PC-9 (cell line): ENCODE measurements at regions of chr15 and their contacts with region 1.

Region 1: GRCh38 chr15:60326824-60327654 is 70.7 kb downstream of the ANXA2 start:
- DNase-seq: peak; percentile 36 to 42
- H3K4me3 ChIP-seq: no peak overlapping the region
- H3K27ac ChIP-seq: no peak overlapping the region
- H3K4me1 ChIP-seq: no peaks in the 10 kb centered on the region
- H3K27me3 ChIP-seq: no peaks in the 10 kb centered on the region
- CTCF ChIP-seq: peak; percentile 89

Region 2: GRCh38 chr15:59528965-59529402 is 798.1 kb before region 1 on chr15:
- CTCF ChIA-PET with region 1: no interaction called
- POLR2A ChIA-PET with region 1: no interaction called
- intact Hi-C with region 1: loop called (anchors 2 kb)
- DNase-seq: peak; percentile 76 to 85
- H3K4me3 ChIP-seq: no peak overlapping the region
- H3K27ac ChIP-seq: no peak overlapping the region
- H3K4me1 ChIP-seq: no peaks in the 10 kb centered on the region; the same call in 1 of the 2 replicates
- H3K27me3 ChIP-seq: no peaks in the 10 kb centered on the region
- CTCF ChIP-seq: peak; percentile 86

Region 3: DNA sequence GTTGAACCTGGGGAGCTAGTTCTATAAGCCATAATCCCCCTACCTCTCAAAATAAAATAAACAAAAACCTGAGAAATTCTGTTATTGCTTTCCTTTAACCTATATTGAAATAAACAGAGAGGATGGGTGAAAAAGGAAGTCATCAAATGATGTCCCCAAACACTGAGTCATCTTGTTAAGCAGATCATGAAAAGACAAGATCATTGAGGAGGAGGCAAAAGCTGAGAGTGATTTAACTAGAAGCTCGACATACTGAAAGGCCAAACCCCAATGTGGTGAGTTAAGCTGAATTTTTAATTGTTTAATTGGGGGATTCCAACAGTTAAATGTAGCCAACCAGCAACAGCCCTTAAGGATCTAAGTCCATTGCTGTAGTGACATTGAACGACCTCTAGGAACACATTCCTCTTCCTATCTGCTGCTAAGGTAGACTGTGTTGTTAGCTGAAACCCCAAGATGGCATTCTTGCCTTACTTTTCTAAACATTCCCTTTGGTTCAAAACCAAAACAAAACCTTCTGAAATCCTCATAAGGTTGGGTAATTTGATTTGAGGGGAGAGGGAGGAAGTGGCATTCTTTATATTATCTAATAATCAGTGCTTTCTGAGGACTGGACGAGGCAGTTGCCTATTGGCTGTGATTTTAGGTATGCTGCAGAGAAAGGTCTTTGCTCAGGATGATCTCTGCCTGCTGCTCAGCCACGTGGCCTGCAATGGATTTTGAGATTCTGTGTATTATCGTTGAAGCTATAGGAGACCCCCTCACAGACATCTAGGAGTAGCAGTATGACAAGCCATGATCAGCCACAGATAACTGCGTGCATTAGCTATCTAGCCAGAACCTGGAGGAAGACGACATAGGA is 575.3 kb before region 1 on chr15:
- CTCF ChIA-PET with region 1: no interaction called
- POLR2A ChIA-PET with region 1: no interaction called
- intact Hi-C with region 1: loop called (anchors 1 kb)
- DNase-seq: peak; percentile 8 to 68
- H3K4me3 ChIP-seq: no peak overlapping the region
- H3K27ac ChIP-seq: no peak overlapping the region
- H3K4me1 ChIP-seq: no peaks in the 10 kb centered on the region
- H3K27me3 ChIP-seq: no peaks in the 10 kb centered on the region
- CTCF ChIP-seq: peak; percentile 62

Region 4: GRCh38 chr15:60035344-60035743 is 291.7 kb before region 1 on chr15:
- CTCF ChIA-PET with region 1: no interaction called
- POLR2A ChIA-PET with region 1: no interaction called
- intact Hi-C with region 1: loop called (anchors 1 kb)
- DNase-seq: no peak
- H3K4me3 ChIP-seq: no peak overlapping the region
- H3K27ac ChIP-seq: no peak overlapping the region
- H3K4me1 ChIP-seq: no peaks in the 10 kb centered on the region
- H3K27me3 ChIP-seq: no peaks in the 10 kb centered on the region
- CTCF ChIP-seq: no peak

Region 5: GRCh38 chr15:60179786-60180391 is 147.2 kb before region 1 on chr15:
- CTCF ChIA-PET with region 1: no interaction called
- POLR2A ChIA-PET with region 1: no interaction called
- intact Hi-C with region 1: loop called (anchors 2 kb)
- DNase-seq: no peak
- H3K4me3 ChIP-seq: no peak overlapping the region
- H3K27ac ChIP-seq: no peak overlapping the region
- H3K4me1 ChIP-seq: no peaks in the 10 kb centered on the region
- H3K27me3 ChIP-seq: no peaks in the 10 kb centered on the region
- CTCF ChIP-seq: peak; percentile 78

Region 6: DNA sequence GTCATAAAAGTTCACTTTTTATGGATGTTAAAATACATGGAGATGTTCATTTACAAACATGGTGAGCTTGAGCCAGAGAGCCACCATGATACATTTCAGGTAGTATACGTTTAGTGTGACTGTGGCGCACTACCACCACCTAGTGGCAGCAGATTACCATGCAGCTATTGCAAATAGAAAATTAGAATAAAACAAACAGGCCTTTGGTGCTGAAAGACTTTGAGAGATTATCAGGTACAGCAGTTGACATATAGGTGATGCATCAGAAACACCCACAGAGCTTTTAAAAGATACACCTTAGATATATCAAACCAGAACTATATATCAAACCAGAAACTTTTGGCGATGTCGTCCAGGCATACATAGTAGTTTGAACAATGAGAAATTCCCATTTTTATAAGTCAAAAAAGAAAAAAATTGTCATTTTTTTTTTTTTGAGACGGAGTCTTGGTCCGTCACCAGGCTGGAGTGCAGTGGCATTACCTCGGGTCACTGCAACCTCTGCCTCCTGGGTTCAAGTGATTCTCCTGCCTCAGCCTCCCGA is 193.9 kb after region 1 on chr15:
- CTCF ChIA-PET with region 1: interaction called, 6 read pairs
- POLR2A ChIA-PET with region 1: no interaction called
- intact Hi-C with region 1: loop called (anchors 1 kb)
- DNase-seq: peak; percentile 36 to 68
- H3K4me3 ChIP-seq: no peak overlapping the region
- H3K27ac ChIP-seq: peak overlapping the region; percentile 92
- H3K4me1 ChIP-seq: peaks cover 33% of the 10 kb centered on the region
- H3K27me3 ChIP-seq: no peaks in the 10 kb centered on the region
- CTCF ChIP-seq: peak; percentile 88

Region 7: DNA sequence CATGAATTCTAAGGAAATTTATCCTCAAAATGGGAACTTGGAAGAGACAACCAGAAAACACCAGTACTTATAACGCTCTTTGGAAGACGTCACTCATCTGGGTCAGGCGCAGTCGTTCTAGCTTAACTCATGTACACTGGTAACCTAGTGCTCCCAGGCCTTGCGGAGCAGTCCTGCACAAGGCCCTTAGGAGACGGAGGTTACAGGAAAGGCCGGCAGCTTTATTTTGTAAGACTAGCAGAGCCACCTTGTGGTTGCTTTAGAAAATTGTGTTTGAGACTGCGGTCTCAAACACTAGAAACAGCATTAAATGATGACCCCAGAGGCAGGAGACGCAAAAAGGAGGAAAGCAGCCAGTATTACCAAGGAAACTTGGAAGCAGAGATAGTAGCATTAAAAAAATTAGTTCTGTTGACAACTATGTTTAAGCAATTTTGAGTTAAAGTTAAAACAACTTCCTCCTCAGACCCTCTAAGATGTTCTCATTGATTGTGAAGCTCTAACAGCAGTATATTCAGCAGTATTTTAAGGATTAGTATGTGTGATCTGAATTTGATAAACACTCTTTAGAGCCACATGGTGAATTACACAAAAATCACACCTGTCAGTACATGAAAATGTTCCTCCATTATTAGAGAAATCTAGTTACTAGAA is 1979.9 kb after region 1 on chr15:
- CTCF ChIA-PET with region 1: no interaction called
- POLR2A ChIA-PET with region 1: no interaction called
- intact Hi-C with region 1: no loop called
- DNase-seq: peak; percentile 29 to 38
- H3K4me3 ChIP-seq: no peak overlapping the region
- H3K27ac ChIP-seq: no peak overlapping the region
- H3K4me1 ChIP-seq: no peaks in the 10 kb centered on the region
- H3K27me3 ChIP-seq: no peaks in the 10 kb centered on the region
- CTCF ChIP-seq: peak; percentile 73